ENCODE measurements at regions of chr13 and their contacts with region 1.

Region 1: GRCh38 chr13:51222037-51222685 is at the start of gene FAM124A:
- DNase-seq: peak in 1 of 2 experiments; percentile 76
- H3K4me3 ChIP-seq: peak within 1 kb of the TSS; percentile 50
- H3K4me3 Mint-ChIP-seq: peak within 1 kb of the TSS; percentile 67
- H3K27ac Mint-ChIP-seq: no peak within 1 kb of the TSS
- H3K4me1 ChIP-seq: peaks cover 5% of the 10 kb centered on the region; the same call in 1 of the 2 replicates
- H3K4me1 Mint-ChIP-seq: no peaks in the 10 kb centered on the region
- H3K27me3 ChIP-seq: peaks cover 4% of the 10 kb centered on the region
- H3K27me3 Mint-ChIP-seq: peaks cover 26% of the 10 kb centered on the region
- CTCF ChIP-seq: peak in 1 of 2 experiments; percentile 10
- total RNA-seq, gene FAM124A: 0.46 and 0.52 TPM in 2 replicates

Region 2: GRCh38 chr13:51125498-51126226 is 96.5 kb before region 1 on chr13:
- CTCF ChIA-PET with region 1: interaction called, 5 read pairs
- POLR2A ChIA-PET with region 1: no interaction called
- intact Hi-C with region 1: loop called (anchors 1 kb)
- DNase-seq: peak; percentile 60 to 66
- H3K4me3 ChIP-seq: no peak overlapping the region
- H3K4me3 Mint-ChIP-seq: no peak overlapping the region
- H3K27ac Mint-ChIP-seq: no peak overlapping the region
- H3K4me1 ChIP-seq: peaks cover 36% of the 10 kb centered on the region
- H3K4me1 Mint-ChIP-seq: peaks cover 18% of the 10 kb centered on the region
- H3K27me3 ChIP-seq: no peaks in the 10 kb centered on the region
- H3K27me3 Mint-ChIP-seq: no peaks in the 10 kb centered on the region
- CTCF ChIP-seq: peak; percentile 67 to 75

Region 3: DNA sequence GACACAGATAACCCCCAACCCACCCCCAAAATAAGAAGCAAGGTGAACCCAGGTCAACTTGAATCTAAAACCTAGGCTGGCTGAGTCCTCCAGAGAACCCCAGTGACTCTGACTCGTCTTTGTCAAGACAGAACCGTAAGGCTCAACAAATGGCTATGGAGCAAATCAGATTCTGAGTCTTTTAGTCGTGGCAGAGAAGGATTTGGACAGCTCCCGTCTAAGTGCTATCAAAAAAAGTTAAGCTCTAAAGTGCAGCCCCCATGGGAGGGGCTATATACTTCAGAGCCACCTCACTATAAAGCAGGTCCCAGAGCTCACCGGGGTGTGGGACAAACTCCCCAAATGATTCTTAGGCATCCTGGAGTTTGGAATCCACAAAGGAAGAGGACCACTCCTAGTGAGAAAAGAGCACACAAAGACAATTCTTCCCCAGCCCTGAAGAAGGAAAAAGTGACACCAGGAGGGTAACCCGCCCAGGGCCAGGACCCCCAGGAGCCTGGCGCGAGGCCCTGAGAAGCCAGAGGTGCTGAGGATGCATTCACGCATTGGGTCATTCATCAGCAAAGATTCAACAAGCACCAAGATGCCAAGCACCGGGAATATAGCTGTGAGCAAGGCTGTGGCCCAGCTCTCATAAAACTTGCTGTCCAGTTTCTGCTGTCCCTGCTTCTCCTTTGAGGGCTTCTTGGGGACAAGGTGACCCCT is 85.7 kb before region 1 on chr13:
- CTCF ChIA-PET with region 1: no interaction called
- POLR2A ChIA-PET with region 1: no interaction called
- intact Hi-C with region 1: no loop called
- DNase-seq: no peak
- H3K4me3 ChIP-seq: no peak overlapping the region
- H3K4me3 Mint-ChIP-seq: no peak overlapping the region
- H3K27ac Mint-ChIP-seq: no peak overlapping the region
- H3K4me1 ChIP-seq: no peaks in the 10 kb centered on the region
- H3K4me1 Mint-ChIP-seq: no peaks in the 10 kb centered on the region
- H3K27me3 ChIP-seq: no peaks in the 10 kb centered on the region
- H3K27me3 Mint-ChIP-seq: no peaks in the 10 kb centered on the region
- CTCF ChIP-seq: no peak

Measured in Caco-2 (cell line).